Activated T-helper 1 cell treated with anti-CD3 and anti-CD28 coated beads, Interleukin-12 subunit alpha, Interleukin-12 subunit beta, Interleukin-2, Interleukin-4 antibody, amounts not matched to agents 30 ng/mL and 10 ng/mL and 1 ng/mL, durations not matched to agents 14 hours and 24 hours and 36 hours (primary cell): ENCODE measurements at regions of chr3 and their contacts with region 1.

Region 1: GRCh38 chr3:138834359-138835212 is at the start of gene PIK3CB:
- DNase-seq: peak; percentile 79
- H3K4me3 Mint-ChIP-seq: peak within 1 kb of the TSS; percentile 94
- H3K27ac Mint-ChIP-seq: peak within 1 kb of the TSS; percentile 94
- H3K4me1 Mint-ChIP-seq: peaks cover 22% of the 10 kb centered on the region
- H3K27me3 Mint-ChIP-seq: no peaks in the 10 kb centered on the region
- total RNA-seq, gene PIK3CB: 19.3 and 22.0 TPM in 2 replicates

Region 2: GRCh38 chr3:138513090-138513843 is 321.3 kb before region 1 on chr3:
- intact Hi-C with region 1: loop called (anchors 5 kb)
- DNase-seq: peak; percentile 3
- H3K4me3 Mint-ChIP-seq: peak overlapping the region; percentile 37
- H3K27ac Mint-ChIP-seq: peak overlapping the region; percentile 13
- H3K4me1 Mint-ChIP-seq: peaks cover 28% of the 10 kb centered on the region
- H3K27me3 Mint-ChIP-seq: no peaks in the 10 kb centered on the region

Region 3: GRCh38 chr3:138686771-138687221 is 147.8 kb before region 1 on chr3:
- intact Hi-C with region 1: loop called (anchors 2 kb)
- DNase-seq: no peak
- H3K4me3 Mint-ChIP-seq: no peak overlapping the region
- H3K27ac Mint-ChIP-seq: peak overlapping the region; percentile 56
- H3K4me1 Mint-ChIP-seq: peaks cover 12% of the 10 kb centered on the region
- H3K27me3 Mint-ChIP-seq: no peaks in the 10 kb centered on the region

Region 4: GRCh38 chr3:138726946-138727730 is 107.4 kb before region 1 on chr3:
- intact Hi-C with region 1: loop called (anchors 5 kb)
- DNase-seq: no peak
- H3K4me3 Mint-ChIP-seq: no peak overlapping the region
- H3K27ac Mint-ChIP-seq: no peak overlapping the region
- H3K4me1 Mint-ChIP-seq: peaks cover 20% of the 10 kb centered on the region
- H3K27me3 Mint-ChIP-seq: no peaks in the 10 kb centered on the region

Region 5: GRCh38 chr3:138797508-138798038 is 37.0 kb before region 1 on chr3:
- intact Hi-C with region 1: no loop called
- DNase-seq: no peak
- H3K4me3 Mint-ChIP-seq: no peak overlapping the region
- H3K27ac Mint-ChIP-seq: peak overlapping the region; percentile 37
- H3K4me1 Mint-ChIP-seq: peaks cover 29% of the 10 kb centered on the region
- H3K27me3 Mint-ChIP-seq: no peaks in the 10 kb centered on the region

Region 6: DNA sequence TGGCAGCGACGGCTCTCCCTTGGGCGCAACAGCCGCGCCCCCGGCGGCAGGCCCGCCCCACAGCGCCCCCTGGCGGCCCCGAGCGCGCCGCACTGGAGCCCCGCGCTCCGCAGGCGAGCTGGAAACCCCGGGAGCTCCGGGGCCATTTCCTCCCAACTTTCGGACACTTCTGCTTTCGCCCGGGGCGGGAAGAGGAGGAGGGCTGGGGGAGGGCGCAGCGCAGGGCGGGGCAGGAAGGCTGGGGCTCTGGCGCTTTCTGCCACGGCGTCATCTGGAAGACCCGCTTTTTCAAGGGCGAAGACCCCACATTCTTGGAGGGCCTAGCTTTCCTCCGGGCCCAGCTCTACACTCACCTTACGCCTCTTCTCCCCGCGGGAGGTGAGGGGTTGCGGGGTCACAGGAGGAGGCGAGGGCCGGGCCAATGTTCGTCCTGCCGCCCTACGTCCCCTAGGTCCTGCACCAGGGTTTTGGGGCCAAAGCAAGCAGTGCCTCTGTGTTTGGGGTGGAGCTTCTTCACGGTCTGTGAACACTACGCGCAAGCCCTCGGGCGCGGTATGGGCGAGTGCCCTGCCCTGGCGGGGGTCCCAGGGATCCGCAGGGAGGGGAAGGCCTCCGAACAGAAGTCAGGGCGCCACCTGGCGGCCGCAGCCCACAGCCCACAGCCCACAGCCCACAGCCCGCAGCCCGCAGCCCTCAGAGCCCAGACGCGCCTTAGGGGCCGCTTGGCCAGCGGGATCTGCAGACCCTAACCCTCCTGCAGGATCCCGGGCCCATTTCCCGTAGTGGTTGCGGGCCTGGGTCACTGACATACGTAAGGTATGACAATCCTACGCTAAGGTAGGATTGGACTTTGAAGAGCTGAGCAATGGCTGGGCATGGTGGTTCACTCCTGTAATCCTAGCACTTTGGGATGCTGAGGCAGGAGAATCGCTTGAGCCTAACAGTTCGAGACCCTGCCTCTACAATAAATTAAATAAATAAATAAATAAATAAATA is 81.2 kb after region 1 on chr3:
- intact Hi-C with region 1: loop called (anchors 1 kb)
- DNase-seq: peak; percentile 68
- H3K4me3 Mint-ChIP-seq: peak overlapping the region; percentile 86
- H3K27ac Mint-ChIP-seq: peak overlapping the region; percentile 71
- H3K4me1 Mint-ChIP-seq: peaks cover 6% of the 10 kb centered on the region
- H3K27me3 Mint-ChIP-seq: peaks cover 16% of the 10 kb centered on the region

Region 7: DNA sequence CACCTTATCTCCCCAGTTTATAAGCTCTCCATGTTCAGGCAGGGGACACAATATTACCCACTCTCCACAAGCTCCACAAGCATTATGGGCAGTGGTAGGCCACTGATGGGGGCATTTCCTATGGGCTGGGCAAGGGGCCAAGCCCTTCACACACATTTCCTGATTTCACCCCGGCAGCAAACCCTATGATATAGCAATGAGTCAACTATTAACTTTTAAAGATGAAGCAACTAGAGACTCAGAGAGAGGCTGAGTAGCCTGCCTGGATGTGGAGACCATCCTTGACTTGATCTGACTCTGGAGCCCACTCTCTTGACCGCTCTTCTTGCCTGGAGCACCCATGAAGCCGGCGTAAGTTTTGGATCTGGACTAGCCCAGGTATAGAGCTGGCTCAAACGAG is 139.9 kb after region 1 on chr3:
- intact Hi-C with region 1: no loop called
- DNase-seq: no peak
- H3K4me3 Mint-ChIP-seq: no peak overlapping the region
- H3K27ac Mint-ChIP-seq: no peak overlapping the region
- H3K4me1 Mint-ChIP-seq: no peaks in the 10 kb centered on the region
- H3K27me3 Mint-ChIP-seq: peaks cover 9% of the 10 kb centered on the region

Region 8: DNA sequence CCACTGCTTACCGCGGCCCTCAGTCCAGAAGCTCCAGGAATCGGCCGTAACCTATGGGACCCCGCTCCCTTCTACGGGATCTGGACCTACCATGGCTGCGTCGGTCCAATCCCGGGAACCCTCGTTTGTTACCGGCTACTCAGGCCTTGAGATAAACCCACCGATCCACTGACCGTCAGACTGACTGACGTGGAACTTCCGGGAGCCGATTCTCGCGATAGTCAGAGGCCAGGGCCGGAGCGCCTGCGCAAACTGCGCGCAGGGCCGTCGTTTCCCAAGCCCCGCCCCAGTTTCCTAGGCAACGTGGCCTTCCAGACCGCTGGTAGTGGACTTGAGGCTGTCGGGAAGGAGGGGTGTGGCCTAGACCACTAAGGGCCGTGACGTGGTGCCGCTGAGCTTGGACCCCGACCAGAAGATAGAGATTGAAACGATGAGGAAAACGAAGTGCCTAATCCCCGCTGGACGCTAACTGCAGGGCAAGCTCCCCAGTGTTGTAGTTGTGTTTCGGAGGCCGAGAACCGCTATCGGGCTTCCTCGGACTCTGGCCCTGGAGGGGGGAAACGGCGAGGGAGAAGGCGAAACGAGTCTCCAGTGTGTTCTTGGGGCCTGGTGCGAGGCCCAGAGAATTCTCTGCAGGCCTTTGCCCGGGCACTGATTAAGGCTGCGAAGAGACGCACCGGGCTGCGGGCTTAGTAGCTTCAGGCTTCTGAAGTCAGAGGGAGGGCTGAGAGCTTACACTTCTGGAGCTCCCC is 555.0 kb after region 1 on chr3 and contains the start of gene COPB2:
- intact Hi-C with region 1: loop called (anchors 10 kb)
- DNase-seq: peak; percentile 96
- H3K4me3 Mint-ChIP-seq: peak within 1 kb of the TSS; percentile 91
- H3K27ac Mint-ChIP-seq: peak within 1 kb of the TSS; percentile 96
- H3K4me1 Mint-ChIP-seq: peaks cover 52% of the 10 kb centered on the region
- H3K27me3 Mint-ChIP-seq: no peaks in the 10 kb centered on the region
- total RNA-seq, gene COPB2: 96.9 and 103 TPM in 2 replicates